ENCODE measurements at regions of chr10 and their contacts with region 1.

Region 1: GRCh38 chr10:6050801-6051445 is 11.2 kb downstream of the IL2RA start:
- DNase-seq: peak; percentile 98
- ATAC-seq: peak; percentile 41
- H3K4me3 Mint-ChIP-seq: peak overlapping the region; percentile 76
- H3K27ac Mint-ChIP-seq: peak overlapping the region; percentile 91
- H3K4me1 Mint-ChIP-seq: peaks cover 84% of the 10 kb centered on the region
- H3K27me3 Mint-ChIP-seq: no peaks in the 10 kb centered on the region
- CTCF ChIP-seq: no peak

Region 2: DNA sequence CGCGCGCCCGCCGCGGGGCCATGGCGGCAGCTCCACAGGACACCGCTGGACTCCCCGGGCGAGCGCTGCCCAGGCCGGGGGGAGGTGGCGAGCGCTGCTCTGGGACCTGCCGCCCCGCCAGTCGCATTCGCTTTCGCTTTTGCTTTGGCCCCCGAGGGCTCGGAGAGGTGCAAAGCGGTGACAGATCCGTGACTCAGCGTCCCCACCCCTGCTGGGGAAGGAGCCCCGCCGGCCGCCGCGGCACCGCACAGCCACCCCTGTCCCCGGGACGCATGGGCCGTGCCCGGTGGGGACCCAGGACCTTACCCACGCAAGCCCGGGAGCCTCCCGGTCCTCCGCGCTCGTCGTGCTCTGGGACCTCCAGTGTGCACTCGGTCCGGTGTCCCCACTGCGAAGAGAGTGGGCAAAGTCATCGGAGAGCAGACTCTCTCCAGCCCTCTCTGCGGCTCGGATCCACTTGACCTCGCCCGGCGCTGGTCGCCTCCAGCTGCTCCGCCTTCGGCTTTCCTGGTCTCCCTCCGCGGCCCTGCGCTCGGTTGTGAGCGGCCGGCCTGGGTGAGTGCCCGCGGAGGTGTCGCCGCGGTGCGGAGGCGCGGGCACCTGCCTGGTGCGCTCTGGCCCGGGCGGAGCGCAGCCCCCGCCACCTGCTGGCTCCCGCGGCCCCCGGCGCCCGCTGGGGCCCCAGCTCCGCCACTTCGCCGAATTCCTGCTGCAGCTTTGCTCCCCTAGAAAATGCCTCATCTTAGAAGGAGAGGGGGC is 73.3 kb before region 1 on chr10 and contains the start of gene IL15RA:
- CTCF ChIA-PET with region 1: interaction called, 3 read pairs
- POLR2A ChIA-PET with region 1: interaction called, 21 read pairs
- intact Hi-C with region 1: loop called (anchors 5 kb)
- DNase-seq: peak; percentile 94
- ATAC-seq: peak; percentile 73
- H3K4me3 Mint-ChIP-seq: peak within 1 kb of the TSS; percentile 95
- H3K27ac Mint-ChIP-seq: peak within 1 kb of the TSS; percentile 97
- H3K4me1 Mint-ChIP-seq: peaks cover 30% of the 10 kb centered on the region
- H3K27me3 Mint-ChIP-seq: peaks cover 7% of the 10 kb centered on the region
- CTCF ChIP-seq: peak; percentile 15
- total RNA-seq, gene IL15RA: 23.5 to 25.1 TPM

Region 3: DNA sequence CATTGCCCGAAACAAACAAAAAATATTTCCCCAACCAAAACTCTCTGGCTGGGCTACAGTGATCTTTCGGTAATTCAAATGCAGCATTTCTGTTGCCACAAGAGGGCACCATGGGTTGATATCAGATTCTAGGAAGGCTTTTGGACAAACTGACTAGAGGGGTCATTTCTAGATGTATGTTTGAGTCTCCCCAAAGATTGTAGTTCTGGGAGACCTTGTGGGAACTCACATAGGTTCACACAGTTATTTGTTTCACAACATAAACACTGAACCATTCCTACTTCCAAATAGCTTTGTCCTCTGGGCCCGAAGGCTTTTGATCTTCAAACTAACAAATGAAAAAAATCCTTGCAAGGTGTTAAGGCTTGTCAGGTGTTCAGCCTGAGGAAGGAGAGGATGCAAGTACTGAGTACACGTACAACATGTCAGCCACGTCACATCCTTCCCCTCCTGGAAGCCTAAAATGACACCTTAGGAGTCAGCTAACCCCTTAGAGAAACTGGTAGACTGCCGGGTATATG is 36.6 kb before region 1 on chr10:
- CTCF ChIA-PET with region 1: interaction called, 9 read pairs
- POLR2A ChIA-PET with region 1: interaction called, 20 read pairs
- intact Hi-C with region 1: no loop called
- DNase-seq: peak; percentile 83
- ATAC-seq: peak; percentile 76
- H3K4me3 Mint-ChIP-seq: no peak overlapping the region
- H3K27ac Mint-ChIP-seq: peak overlapping the region; percentile 89
- H3K4me1 Mint-ChIP-seq: peaks cover 69% of the 10 kb centered on the region
- H3K27me3 Mint-ChIP-seq: no peaks in the 10 kb centered on the region
- CTCF ChIP-seq: peak; percentile 70

Region 4: GRCh38 chr10:6062101-6062771 is 11.3 kb after region 1 on chr10 and contains the start of gene IL2RA:
- CTCF ChIA-PET with region 1: interaction called, 15 read pairs
- POLR2A ChIA-PET with region 1: interaction called, 846 read pairs
- intact Hi-C with region 1: no loop called
- DNase-seq: peak; percentile 85
- ATAC-seq: peak; percentile 75
- H3K4me3 Mint-ChIP-seq: peak within 1 kb of the TSS; percentile 94
- H3K27ac Mint-ChIP-seq: peak within 1 kb of the TSS; percentile 99
- H3K4me1 Mint-ChIP-seq: peaks cover 55% of the 10 kb centered on the region
- H3K27me3 Mint-ChIP-seq: no peaks in the 10 kb centered on the region
- CTCF ChIP-seq: no peak
- total RNA-seq, gene IL2RA: 868 to 874 TPM

Region 5: GRCh38 chr10:6068422-6068821 is 17.5 kb after region 1 on chr10:
- CTCF ChIA-PET with region 1: interaction called, 15 read pairs
- POLR2A ChIA-PET with region 1: interaction called, 846 read pairs
- intact Hi-C with region 1: loop called (anchors 2 kb)
- DNase-seq: peak; percentile 75
- ATAC-seq: peak; percentile 22
- H3K4me3 Mint-ChIP-seq: peak overlapping the region; percentile 77
- H3K27ac Mint-ChIP-seq: peak overlapping the region; percentile 97
- H3K4me1 Mint-ChIP-seq: peaks cover 94% of the 10 kb centered on the region
- H3K27me3 Mint-ChIP-seq: no peaks in the 10 kb centered on the region
- CTCF ChIP-seq: no peak

Region 6: DNA sequence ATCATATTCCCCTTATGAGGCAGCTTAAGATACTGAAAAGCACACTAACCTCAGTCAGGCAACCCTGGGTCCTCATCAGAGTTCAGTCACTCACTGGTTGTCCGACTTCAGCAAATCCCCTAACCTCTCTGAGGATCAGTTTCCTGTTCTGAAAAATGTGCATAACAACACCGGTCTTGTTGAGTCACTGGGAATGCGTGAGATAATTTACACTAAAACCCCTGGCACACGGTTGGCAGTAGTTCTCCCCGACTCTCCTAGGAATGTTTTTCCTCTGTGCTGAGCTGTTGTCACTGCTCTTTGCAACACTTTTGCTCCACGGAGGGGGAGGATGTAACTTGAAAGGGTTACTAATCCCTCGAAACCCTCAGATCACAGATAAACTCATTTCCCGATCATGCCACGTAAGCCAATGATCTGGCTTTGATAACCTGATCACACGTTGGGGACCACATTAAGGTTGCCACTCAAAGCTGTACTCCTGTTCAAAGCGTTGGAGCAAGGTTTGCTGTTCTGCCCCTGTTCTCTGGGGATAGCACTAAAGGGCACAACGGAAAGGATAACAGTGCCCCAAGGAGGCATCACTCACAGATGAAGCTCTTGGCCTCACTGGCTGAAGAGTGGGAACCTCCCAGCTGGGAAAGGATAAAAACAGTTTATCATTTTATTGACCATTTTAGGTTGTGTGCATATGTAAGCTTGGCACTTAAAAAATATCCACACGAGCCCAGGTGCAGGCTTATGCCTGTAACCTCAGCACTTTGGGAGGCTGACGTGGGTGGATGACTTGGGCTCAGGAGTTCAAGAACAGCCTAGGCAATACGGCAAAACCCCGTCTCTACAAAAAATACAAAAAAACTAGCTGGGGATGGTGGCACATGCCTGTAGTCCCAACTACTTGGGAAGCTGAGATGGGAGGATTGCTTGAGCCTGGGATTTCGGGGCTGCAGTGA is 32.9 kb after region 1 on chr10:
- CTCF ChIA-PET with region 1: interaction called, 118 read pairs
- POLR2A ChIA-PET with region 1: interaction called, 846 read pairs
- intact Hi-C with region 1: loop called (anchors 5 kb)
- DNase-seq: peak; percentile 88
- ATAC-seq: peak; percentile 72
- H3K4me3 Mint-ChIP-seq: peak overlapping the region; percentile 78
- H3K27ac Mint-ChIP-seq: peak overlapping the region; percentile 94
- H3K4me1 Mint-ChIP-seq: peaks cover 68% of the 10 kb centered on the region
- H3K27me3 Mint-ChIP-seq: no peaks in the 10 kb centered on the region
- CTCF ChIP-seq: no peak

Region 7: GRCh38 chr10:6114805-6115341 is 64.0 kb after region 1 on chr10:
- CTCF ChIA-PET with region 1: no interaction called
- POLR2A ChIA-PET with region 1: no interaction called
- intact Hi-C with region 1: no loop called
- DNase-seq: no peak
- ATAC-seq: no peak
- H3K4me3 Mint-ChIP-seq: no peak overlapping the region
- H3K27ac Mint-ChIP-seq: peak overlapping the region; percentile 43
- H3K4me1 Mint-ChIP-seq: peaks cover 23% of the 10 kb centered on the region
- H3K27me3 Mint-ChIP-seq: no peaks in the 10 kb centered on the region
- CTCF ChIP-seq: no peak